ENCODE measurements at regions of chr5 and their contacts with region 1.

Region 1: DNA sequence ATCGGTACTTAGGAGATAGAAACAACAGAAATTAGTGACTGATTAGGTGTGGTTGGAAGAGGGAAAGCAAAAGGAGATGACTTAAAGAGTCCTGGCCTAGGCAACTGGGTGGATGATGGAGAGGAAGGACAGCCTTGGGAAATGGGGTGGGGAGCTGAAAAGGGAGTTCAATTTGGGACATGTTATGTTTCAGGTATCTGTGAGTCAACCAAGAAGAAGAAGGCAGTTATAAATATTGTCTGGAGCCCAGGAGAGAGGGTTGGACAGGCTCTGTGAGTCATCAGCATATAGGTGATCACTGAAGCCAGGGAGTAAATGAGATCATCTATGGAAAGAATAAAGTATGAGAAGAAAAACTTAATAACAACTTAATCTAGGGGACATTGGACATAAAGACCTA is 357.7 kb downstream of the NPR3 start:
- DNase-seq: peak; percentile 50
- ATAC-seq: no peak
- H3K4me3 ChIP-seq: no peak overlapping the region
- H3K27ac ChIP-seq: no peak overlapping the region
- H3K4me1 ChIP-seq: peaks cover 10% of the 10 kb centered on the region
- H3K27me3 ChIP-seq: no peaks in the 10 kb centered on the region
- CTCF ChIP-seq: no peak
- POLR2A ChIP-seq: no peak
- RAD21 ChIP-seq: no peak

Region 2: DNA sequence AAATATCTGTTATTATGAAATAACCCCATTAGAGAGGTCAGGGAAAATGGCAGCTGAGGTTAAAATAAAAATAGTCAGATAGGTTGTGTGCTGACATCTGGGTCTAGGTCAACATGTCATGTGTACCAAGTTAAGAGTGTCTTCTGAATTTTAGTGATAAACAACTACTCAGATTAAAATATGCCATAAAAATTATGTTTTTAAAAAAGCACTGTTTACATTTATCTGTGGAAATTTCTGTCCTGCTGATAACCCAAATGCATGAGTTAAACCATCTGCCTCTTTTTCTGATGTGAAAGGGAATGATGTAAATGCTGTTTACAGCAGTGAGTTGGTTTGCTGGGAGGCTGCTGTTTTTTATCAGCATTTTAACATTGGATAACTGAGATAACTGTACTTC is 10.8 kb after region 1 on chr5:
- CTCF ChIA-PET with region 1: no interaction called
- POLR2A ChIA-PET with region 1: interaction called, 21 read pairs
- dilution Hi-C with region 1: no loop called
- in situ Hi-C with region 1: no loop called
- intact Hi-C with region 1: no loop called
- DNase-seq: peak; percentile 53
- ATAC-seq: peak; percentile 72
- H3K4me3 ChIP-seq: no peak overlapping the region
- H3K27ac ChIP-seq: peak overlapping the region; percentile 93; the same call in 1 of the 2 replicates
- H3K4me1 ChIP-seq: peaks cover 8% of the 10 kb centered on the region
- H3K27me3 ChIP-seq: no peaks in the 10 kb centered on the region
- CTCF ChIP-seq: no peak
- POLR2A ChIP-seq: no peak
- RAD21 ChIP-seq: no peak

Measured in IMR-90 (cell line).